Colonic mucosa (tissue), 4 donors: ENCODE measurements at regions of chr6 and their contacts with region 1.

Region 1: DNA sequence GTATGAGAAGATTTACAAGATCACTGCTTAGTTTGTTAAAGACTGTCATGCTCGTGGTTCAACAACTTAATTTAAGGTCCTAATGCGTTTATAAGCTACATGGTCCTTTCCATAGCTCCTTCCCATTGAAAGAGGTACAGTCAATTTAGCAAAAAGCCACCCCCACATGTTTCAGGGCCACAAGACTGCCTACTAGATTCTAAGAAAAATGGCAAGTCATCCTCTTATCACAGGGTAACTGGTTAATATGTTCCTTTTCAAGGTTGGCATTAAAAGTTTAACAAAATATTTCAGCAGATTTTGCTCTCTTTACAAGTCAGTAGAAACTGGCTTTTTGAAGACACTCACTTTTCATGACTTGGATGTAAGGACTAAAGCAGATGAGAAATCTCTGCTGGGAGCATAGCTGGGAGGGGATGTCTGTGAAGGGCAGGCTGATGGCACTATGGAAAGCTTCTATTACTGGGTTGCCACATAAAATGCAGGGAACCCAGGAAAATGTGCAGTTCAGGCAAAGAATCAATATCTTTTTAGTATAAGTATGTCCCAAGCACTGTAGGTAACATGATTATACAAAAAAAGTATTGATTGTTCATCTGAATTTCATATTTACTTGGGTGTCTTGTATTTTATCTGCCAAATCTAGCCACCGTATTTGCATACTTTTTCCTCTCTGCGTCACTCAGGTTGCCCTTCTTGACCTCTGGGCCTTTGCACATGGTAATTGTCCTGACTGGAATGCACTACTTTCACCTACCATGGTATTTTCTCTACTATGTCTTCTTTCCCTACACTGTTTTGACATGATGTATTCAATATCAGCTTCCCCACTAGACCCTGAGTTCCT is 15.5 kb downstream of the GSTA3 start:
- DNase-seq: no peak
- H3K4me3 ChIP-seq: no peak overlapping the region
- H3K27ac ChIP-seq: no peak overlapping the region
- H3K4me1 ChIP-seq: no peaks in the 10 kb centered on the region
- H3K27me3 ChIP-seq: no peaks in the 10 kb centered on the region
- CTCF ChIP-seq: no peak

Region 2: DNA sequence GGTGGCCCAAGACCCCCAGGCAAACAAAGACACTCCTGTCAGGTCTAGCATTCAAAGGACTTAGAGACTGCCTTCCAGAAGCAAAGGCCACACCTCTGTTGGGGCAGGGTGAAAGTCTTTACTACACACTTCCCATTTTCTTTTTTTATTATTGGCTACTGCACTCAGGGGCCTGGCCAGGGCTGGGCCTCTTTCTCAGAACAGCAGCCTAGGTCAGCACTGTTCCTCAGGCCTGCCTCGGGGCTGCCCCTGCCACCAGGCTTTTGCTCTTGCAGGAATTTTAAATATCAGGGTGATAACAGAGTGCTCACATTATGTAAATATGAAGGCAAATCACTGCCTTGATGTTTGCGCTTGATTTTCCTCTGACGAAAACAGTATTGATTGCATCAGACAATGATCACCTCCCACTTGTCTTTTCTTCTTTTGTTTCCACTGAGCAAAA is 82.6 kb after region 1 on chr6:
- intact Hi-C with region 1: loop called (anchors 10 kb)
- DNase-seq: no peak
- H3K4me3 ChIP-seq: no peak overlapping the region
- H3K27ac ChIP-seq: no peak overlapping the region
- H3K4me1 ChIP-seq: no peaks in the 10 kb centered on the region
- H3K27me3 ChIP-seq: no peaks in the 10 kb centered on the region
- CTCF ChIP-seq: no peak

Region 3: DNA sequence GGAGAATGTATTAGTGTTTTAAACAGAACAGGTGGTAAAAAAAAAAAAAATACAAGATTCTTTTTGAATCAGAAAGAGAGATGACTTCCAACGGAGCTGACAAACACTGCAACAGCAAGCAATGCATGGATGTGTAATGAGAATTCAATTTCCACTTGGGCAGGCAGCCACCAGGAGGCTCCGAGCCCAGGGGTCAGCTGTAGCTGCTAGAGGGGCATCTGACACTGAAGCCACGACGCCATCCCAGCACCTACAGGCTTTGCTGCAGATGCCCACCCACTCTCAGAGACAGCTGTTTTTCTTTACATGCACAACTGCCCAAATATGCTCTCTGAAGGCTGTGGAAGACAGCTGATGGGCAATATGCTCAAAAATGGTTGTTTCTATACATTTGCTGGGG is 379.3 kb after region 1 on chr6:
- intact Hi-C with region 1: no loop called
- DNase-seq: no peak
- H3K4me3 ChIP-seq: no peak overlapping the region
- H3K27ac ChIP-seq: no peak overlapping the region
- H3K4me1 ChIP-seq: no peaks in the 10 kb centered on the region
- H3K27me3 ChIP-seq: no peaks in the 10 kb centered on the region
- CTCF ChIP-seq: no peak